Activated CD4-positive, alpha-beta memory T cell treated with anti-CD3 and anti-CD28 coated beads for 36 hours (primary cell): ENCODE measurements at regions of chr10 and their contacts with region 1.

Region 1: DNA sequence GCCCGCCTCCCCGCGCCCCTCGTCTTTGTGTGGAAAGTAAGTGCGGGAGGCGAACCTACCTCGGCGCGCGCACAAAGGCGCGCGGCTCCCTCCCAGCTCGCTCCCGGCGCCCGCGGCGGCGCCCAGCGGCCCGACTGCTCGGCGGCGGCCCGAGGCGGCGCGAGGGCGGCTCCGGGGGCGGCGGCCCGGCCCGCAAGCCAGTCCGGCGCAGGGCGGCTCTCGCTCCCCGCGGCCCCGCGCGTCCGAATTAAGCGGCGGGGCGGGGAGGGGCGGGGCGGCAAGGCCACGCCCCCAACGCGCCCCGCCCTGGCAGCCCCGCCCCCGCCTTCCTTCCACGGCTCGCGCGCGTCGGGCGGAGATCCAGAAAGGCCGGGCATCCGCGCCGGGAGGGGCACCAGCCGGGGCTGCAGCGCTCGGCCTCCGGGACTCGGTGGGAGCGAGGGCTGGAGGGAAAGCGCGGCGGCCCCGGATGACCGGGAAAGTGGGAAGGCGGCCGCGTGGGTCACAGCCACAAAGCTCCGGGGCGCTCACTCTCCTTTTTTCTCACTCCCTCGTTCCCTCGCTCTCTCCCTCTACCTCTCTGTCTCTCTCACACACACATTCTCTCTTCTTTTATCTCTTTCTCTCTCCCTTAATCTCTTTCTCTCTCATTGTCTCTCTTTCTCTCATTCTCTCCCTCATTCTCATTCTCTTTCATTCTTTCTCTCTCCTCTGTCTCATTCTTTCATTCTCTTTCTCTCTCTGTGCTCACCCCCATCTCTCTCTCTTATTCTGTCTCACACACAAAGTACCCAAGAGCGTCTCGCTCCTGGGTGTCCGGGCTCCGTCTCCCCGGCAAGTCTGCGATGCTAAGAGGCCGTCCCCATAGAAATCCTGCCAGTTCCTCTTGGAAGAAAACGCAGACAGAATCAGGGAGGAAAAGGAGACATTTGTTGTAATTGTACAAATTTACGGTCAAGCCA is 170.2 kb downstream of the FAM107B start:
- DNase-seq: peak; percentile 78
- H3K4me3 Mint-ChIP-seq: peak overlapping the region; percentile 93
- H3K27ac Mint-ChIP-seq: peak overlapping the region; percentile 97
- H3K4me1 Mint-ChIP-seq: peaks cover 60% of the 10 kb centered on the region
- H3K27me3 Mint-ChIP-seq: no peaks in the 10 kb centered on the region

Region 2: DNA sequence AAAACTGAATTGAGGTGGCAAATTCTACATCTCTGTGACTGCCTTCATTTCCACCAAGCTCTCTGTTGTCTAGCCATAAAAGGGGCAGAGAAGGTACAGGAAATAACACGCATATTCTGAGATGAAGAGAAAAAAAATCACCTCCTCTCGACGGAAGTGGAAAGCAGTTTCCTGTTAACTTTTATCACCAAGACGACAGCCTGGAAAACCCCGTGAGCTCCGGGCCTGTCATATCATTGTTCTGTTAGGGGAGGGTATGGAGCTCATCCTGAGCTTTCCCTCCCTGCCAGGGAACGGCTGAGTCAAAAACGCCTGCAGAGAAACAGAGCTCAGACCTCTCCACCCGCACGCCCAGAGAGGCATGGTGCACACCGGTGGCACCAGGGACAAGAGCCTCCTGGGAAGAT is 817.4 kb before region 1 on chr10:
- CTCF ChIA-PET with region 1: no interaction called
- POLR2A ChIA-PET with region 1: no interaction called
- intact Hi-C with region 1: loop called (anchors 1 kb)
- DNase-seq: peak; percentile 89
- H3K4me3 Mint-ChIP-seq: no peak overlapping the region
- H3K27ac Mint-ChIP-seq: peak overlapping the region; percentile 82
- H3K4me1 Mint-ChIP-seq: peaks cover 31% of the 10 kb centered on the region
- H3K27me3 Mint-ChIP-seq: no peaks in the 10 kb centered on the region

Region 3: DNA sequence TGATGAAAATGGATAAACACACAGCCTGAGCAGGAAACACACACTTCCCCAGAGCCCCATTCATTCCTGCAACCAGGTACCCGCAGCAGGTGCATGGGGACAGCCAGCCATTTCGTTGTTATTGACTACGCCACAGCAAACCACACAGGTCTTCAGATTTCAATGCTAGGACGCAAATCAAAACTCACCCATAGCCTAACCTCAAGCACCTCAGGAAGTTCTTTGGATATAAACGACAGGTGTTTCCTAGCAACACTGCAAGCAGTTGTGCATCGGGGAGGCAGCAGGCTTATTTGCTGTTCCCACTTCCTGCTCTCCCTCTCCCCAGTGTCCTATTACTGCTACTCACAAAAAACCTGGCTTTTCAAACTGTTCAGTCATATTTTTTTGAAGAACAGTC is 97.3 kb before region 1 on chr10:
- CTCF ChIA-PET with region 1: no interaction called
- POLR2A ChIA-PET with region 1: no interaction called
- intact Hi-C with region 1: loop called (anchors 2 kb)
- DNase-seq: peak; percentile 72
- H3K4me3 Mint-ChIP-seq: no peak overlapping the region
- H3K27ac Mint-ChIP-seq: peak overlapping the region; percentile 53
- H3K4me1 Mint-ChIP-seq: peaks cover 37% of the 10 kb centered on the region
- H3K27me3 Mint-ChIP-seq: no peaks in the 10 kb centered on the region

Region 4: DNA sequence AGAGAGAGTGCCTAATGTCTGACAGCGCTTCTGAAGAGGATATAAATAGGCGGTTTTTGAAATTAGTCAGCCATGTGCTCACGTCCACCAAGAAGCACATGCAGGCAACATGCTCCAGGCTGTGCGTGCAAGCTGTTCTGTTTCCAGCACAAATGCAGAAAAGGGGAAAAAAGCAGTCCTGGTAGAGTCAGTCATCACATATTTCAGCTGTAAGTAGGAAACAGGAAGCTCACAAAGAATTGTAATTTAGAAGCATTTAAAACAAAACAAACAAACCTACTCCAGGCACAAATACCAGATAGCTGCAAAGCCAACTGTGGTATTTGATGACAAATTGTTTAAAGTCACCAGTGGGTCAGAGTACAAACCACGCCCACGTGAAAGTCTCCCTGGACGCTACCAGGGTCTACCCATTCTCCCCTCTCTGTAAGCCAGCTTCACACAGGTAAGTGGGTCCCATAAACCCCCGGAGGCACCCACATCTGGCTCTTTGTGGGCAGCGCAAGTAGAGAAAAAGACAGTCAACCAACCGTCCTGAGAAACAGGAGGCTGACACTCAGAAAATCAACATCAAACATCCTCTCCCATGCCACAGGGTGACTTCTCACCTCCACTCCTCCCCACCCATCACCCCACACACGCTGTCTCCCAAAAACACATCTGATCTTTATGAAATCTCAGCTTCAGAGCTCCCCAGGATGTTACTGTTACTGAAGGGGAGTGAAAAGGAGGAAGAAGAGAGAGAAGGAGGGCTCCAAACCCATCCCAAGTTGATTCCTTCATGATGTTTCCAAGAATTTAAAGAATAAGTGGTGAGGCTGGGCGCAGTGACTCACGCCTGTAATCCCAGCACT is 16.2 kb before region 1 on chr10:
- CTCF ChIA-PET with region 1: interaction called, 6 read pairs
- POLR2A ChIA-PET with region 1: interaction called, 14 read pairs
- intact Hi-C with region 1: loop called (anchors 1 kb)
- DNase-seq: peak; percentile 82
- H3K4me3 Mint-ChIP-seq: peak overlapping the region; percentile 52
- H3K27ac Mint-ChIP-seq: peak overlapping the region; percentile 98
- H3K4me1 Mint-ChIP-seq: peaks cover 90% of the 10 kb centered on the region
- H3K27me3 Mint-ChIP-seq: no peaks in the 10 kb centered on the region

Region 5: GRCh38 chr10:14617852-14618251 is 13.4 kb after region 1 on chr10:
- CTCF ChIA-PET with region 1: no interaction called
- POLR2A ChIA-PET with region 1: no interaction called
- intact Hi-C with region 1: no loop called
- DNase-seq: no peak
- H3K4me3 Mint-ChIP-seq: no peak overlapping the region
- H3K27ac Mint-ChIP-seq: no peak overlapping the region
- H3K4me1 Mint-ChIP-seq: peaks cover 28% of the 10 kb centered on the region
- H3K27me3 Mint-ChIP-seq: no peaks in the 10 kb centered on the region

Region 6: DNA sequence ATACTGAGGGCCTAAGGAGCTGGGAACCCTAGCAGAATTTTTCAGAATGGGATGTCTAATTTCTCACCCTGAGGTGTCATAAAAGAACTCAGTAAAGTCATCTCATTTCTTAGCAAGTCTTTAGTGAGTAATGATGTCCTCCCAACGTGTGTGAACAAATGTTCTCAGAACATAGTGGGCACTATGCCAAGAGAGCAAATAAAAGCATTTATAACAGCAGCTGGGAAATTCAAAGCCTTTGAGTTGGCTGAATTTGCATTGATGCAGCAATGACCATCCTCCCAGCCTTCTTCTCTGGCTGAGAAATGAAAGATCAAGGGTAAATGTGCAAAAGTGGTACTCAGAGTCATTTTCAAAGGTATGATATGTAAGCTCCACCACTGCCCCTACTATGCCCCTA is 60.8 kb after region 1 on chr10:
- CTCF ChIA-PET with region 1: interaction called, 6 read pairs
- POLR2A ChIA-PET with region 1: interaction called, 11 read pairs
- intact Hi-C with region 1: loop called (anchors 1 kb)
- DNase-seq: peak; percentile 40
- H3K4me3 Mint-ChIP-seq: no peak overlapping the region
- H3K27ac Mint-ChIP-seq: peak overlapping the region; percentile 56
- H3K4me1 Mint-ChIP-seq: peaks cover 45% of the 10 kb centered on the region
- H3K27me3 Mint-ChIP-seq: no peaks in the 10 kb centered on the region

Region 7: DNA sequence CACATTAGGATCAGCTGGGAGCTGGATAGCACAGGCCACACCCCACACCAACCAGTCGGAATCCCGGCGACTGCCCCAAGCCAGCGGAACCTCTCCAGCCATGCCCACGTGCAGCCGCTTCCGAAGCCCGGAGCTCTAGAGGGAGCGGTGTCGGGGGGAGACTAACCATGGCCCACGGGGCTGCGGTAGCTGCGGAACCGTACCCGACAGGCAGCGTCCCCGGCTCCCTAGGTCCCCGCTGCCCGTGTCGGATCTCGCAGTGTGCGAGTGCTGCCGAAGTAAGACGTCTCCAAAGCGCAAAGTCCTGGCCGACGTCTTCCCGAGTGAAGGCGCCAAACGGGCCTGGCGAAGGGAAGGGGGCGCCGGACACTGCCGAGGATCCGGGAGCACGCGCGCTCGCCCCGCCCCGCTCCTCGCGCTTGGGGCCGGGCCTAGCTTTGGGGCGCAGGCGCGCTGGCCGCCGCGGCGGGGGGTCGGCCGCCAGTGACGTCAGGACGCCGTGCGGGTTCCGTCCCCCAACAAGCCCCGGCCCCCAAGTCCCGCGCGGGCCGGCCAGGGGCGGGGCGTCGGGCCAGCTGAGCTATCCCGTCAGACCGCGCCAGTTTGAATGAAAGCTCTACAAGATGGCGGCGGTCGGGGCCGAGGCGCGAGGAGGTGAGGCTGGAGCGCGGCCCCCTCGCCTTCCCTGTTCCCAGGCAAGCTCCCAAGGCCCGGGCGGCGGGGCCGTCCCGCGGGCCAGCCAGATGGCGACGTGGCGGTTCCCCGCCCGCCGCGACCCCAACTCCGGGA is 274.0 kb after region 1 on chr10 and contains the start of gene SUV39H2:
- CTCF ChIA-PET with region 1: no interaction called
- POLR2A ChIA-PET with region 1: no interaction called
- intact Hi-C with region 1: loop called (anchors 2 kb)
- DNase-seq: peak; percentile 96
- H3K4me3 Mint-ChIP-seq: peak within 1 kb of the TSS; percentile 94
- H3K27ac Mint-ChIP-seq: peak within 1 kb of the TSS; percentile 80
- H3K4me1 Mint-ChIP-seq: peaks cover 41% of the 10 kb centered on the region
- H3K27me3 Mint-ChIP-seq: no peaks in the 10 kb centered on the region
- total RNA-seq, gene SUV39H2: 38.7 to 39.8 TPM

Region 8: DNA sequence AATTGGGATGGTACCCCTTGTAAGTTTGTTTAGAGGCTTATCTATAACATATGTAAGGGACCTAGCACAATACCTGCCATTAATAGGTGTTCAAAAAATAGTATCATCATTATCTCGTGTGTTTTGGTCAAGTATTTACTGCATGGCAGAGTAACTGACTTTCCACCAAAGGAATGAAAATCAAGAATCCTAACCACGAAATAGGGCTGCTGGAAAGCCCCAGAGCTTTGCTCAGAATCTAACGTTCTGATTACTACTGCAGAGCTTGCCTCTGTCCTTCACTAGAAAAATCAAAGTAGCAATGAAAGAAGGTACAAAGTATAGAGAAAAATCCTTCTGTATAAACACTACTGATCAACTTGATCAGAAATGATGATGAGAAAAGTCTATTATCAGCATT is 314.5 kb after region 1 on chr10:
- CTCF ChIA-PET with region 1: no interaction called
- POLR2A ChIA-PET with region 1: no interaction called
- intact Hi-C with region 1: no loop called
- DNase-seq: no peak
- H3K4me3 Mint-ChIP-seq: no peak overlapping the region
- H3K27ac Mint-ChIP-seq: no peak overlapping the region
- H3K4me1 Mint-ChIP-seq: peaks cover 18% of the 10 kb centered on the region
- H3K27me3 Mint-ChIP-seq: no peaks in the 10 kb centered on the region